ENCODE measurements at regions of chr17 and their contacts with region 1.

Region 1: DNA sequence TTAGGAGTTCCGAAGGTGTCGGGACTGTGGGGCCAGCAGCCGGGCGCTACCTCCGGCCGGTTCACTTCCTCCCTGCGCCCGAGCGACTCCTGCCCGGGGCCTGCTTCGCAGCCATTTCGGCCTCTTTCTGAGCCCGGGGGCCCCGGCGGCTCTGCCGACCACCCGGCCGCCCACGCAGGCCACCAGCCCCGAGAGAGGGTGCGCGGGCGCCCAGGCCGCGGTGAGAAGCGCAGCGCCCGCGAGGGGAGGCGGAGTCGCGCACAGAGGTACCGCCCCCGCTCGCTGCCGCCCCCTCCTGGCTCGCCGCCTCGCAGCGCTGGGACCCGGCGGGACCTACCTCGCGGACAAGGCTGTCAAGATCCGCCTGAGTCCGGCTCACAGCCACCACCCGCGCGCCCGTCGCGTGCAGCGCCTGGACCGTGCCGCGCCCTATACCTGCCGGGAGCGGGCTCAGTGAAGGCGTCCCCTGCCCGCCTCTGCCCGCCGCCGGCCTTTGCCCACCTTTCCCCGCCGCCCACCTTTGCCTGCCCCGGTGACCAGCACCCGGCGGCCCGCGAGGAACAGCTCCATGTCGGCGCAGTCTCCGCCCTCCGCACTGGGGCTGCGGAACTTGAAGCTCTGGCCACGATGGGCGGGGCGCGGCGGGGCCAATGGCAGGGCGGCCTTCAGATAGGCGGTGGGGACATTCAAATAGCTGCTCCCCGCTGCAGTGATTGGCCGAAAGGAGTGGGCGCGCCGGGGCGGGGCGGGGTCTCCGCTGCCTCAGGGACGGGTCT is at the start of gene DCXR:
- DNase-seq: peak; percentile 82 to 98 (median 95)
- ATAC-seq: peak; percentile 93
- H3K4me3 ChIP-seq: peak within 1 kb of the TSS; percentile 68 to 73
- H3K4me3 Mint-ChIP-seq: peak within 1 kb of the TSS; percentile 87
- H3K27ac ChIP-seq: peak within 1 kb of the TSS; percentile 58 to 80
- H3K27ac Mint-ChIP-seq: peak within 1 kb of the TSS; percentile 87
- H3K4me1 ChIP-seq: peaks cover 14% of the 10 kb centered on the region
- H3K4me1 Mint-ChIP-seq: peaks cover 26% of the 10 kb centered on the region
- H3K27me3 ChIP-seq: no peaks in the 10 kb centered on the region
- H3K27me3 Mint-ChIP-seq: no peaks in the 10 kb centered on the region
- CTCF ChIP-seq: peak; percentile 82
- total RNA-seq, gene DCXR: 71.7 to 77.7 TPM

Region 2: DNA sequence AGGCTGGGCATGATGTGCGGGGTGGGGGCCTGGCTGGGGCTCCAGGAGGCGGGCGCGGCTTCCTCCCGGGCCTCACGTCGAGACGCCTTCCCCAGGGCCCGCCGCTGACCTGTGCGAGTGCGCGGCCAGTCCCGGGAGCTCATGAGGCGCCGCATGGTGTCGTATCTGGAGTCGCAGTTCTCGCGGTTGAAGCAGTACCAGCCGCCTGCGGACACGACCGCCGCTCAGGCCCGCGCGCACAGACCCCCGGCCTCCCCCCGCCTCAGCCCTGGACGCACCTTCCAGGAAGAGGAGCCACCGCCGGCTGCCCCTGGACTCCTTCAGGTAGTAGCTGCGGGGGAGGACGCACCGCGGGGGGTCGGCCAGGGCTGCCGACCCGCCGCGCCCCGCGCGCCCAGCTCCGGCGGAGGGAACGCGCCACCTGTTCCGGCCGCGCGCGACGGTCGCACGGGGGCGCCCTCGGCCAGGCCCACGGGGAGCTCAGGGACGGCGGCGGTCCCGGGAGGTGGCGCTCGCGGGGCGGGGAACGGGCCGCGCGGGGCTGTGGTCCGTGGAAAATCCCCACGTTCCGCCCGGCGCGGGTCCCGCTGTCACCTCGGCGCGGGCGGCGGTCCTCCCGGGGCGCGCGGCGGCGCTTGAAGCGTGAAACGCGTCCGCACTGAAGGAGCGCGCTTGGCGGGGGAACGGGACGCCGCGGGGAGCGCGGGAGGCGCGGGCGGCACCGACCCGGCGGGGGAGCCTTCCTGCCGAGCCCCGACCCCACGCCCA is 77.8 kb before region 1 on chr17:
- CTCF ChIA-PET with region 1: interaction called, 11 read pairs
- POLR2A ChIA-PET with region 1: no interaction called
- intact Hi-C with region 1: no loop called
- DNase-seq: peak; percentile 71 to 92 (median 81)
- ATAC-seq: peak; percentile 93
- H3K4me3 ChIP-seq: peak overlapping the region; percentile 8 to 35
- H3K4me3 Mint-ChIP-seq: peak overlapping the region; percentile 15
- H3K27ac ChIP-seq: no peak overlapping the region
- H3K27ac Mint-ChIP-seq: no peak overlapping the region
- H3K4me1 ChIP-seq: peaks cover 6% of the 10 kb centered on the region
- H3K4me1 Mint-ChIP-seq: peaks cover 10% of the 10 kb centered on the region
- H3K27me3 ChIP-seq: peaks cover 6 to 22% of the 10 kb centered on the region in 2 experiments
- H3K27me3 Mint-ChIP-seq: peaks cover 13% of the 10 kb centered on the region
- CTCF ChIP-seq: peak; percentile 90

Region 3: DNA sequence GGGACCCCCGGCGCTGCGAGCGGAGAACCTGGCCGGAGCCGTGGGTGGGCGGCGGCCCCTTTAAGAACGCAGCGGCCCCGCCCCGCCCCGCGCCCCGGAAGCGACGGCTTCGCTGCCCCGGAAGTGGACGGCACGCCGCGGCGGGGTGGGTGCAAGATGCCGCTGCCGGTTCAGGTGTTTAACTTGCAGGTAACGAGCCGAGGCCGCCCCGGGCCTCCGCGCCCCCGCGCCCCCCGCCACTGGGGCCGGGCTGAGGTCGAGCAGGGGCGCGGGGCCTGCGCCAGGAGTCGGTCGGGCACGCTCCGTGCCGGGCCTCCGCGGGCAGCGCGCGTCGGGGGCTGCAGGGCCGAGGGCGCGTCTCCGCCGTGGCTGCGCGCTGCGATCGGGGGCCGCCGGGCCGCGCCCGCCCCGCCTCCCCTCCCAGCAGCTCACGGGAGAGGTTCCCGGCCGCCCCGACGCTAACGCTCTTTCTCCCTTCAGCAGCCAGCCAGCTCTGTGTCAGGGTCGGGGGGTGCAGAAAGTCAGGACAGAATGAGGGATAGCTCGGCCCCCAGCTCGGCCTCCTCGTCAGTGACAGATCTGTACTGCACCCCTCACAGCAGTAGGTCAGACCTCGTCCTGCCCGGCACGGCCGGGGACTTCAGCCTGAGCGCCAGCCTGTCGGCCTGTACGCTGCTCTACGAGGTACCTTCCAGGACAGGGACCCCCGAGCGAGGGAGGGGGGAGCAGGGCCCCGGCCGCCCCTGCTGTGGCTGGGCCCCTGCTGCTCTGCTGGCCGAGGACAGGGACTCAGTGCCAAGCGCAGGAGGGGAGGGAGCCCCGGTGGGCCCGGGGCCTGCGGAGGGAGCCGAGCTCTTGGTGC is 14.7 kb after region 1 on chr17 and contains the starts of genes GPS1 and RFNG:
- CTCF ChIA-PET with region 1: interaction called, 7 read pairs
- POLR2A ChIA-PET with region 1: interaction called, 4 read pairs
- intact Hi-C with region 1: loop called in 1 of 2 experiments (anchors 1 kb)
- DNase-seq: peak; percentile 49 to 87 (median 82)
- ATAC-seq: peak; percentile 92
- H3K4me3 ChIP-seq: peak within 1 kb of the TSS; percentile 63 to 67
- H3K4me3 Mint-ChIP-seq: peak within 1 kb of the TSS; percentile 83
- H3K27ac ChIP-seq: peak within 1 kb of the TSS; percentile 25 to 30
- H3K27ac Mint-ChIP-seq: peak within 1 kb of the TSS; percentile 72
- H3K4me1 ChIP-seq: peaks cover 29% of the 10 kb centered on the region
- H3K4me1 Mint-ChIP-seq: peaks cover 18% of the 10 kb centered on the region
- H3K27me3 ChIP-seq: no peaks in the 10 kb centered on the region
- H3K27me3 Mint-ChIP-seq: no peaks in the 10 kb centered on the region
- CTCF ChIP-seq: no peak
- total RNA-seq, gene GPS1: 72.0 to 72.8 TPM
- total RNA-seq, gene RFNG: 26.2 to 27.2 TPM

Region 4: DNA sequence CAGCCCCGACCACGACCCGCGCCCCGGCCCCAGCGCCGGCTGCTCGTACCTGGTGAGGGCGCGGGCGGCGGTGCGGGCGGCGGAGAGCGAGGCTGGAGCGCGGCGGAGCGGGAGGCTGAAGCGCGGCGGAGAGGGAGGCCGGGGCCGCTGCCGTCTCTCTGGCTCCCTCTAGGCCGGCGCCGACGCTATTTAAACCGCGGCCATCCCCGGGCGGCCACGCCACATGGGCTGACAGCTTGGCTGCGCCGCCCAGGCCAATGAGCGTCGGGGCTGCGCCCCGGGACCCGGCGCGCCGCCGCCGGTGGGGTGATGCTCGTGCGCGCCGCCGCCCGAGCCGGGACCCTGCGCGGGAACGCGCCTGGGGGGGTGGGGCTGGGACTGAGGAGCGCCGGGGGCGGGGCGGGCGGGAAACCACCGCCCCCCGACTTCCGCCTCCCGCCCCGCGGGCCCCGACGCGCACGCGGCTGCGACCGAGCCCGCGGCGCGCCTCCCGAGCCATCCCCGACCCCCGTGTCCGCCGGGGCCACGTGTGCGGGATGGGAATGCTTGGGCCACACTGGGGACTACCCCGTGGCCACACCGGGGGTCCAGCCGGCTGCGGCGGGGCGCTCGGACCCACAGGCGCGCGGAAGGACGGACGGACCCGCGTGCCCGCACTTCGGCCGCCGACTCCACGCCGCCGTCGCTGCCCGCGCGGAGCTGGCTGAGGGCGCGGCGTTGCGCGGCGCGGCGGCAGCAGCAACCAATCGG is 60.9 kb after region 1 on chr17 and contains the start of gene FASN:
- CTCF ChIA-PET with region 1: interaction called, 4 read pairs
- POLR2A ChIA-PET with region 1: interaction called, 4 read pairs
- intact Hi-C with region 1: loop called (anchors 1 kb)
- DNase-seq: peak; percentile 81 to 96 (median 92)
- ATAC-seq: peak; percentile 61
- H3K4me3 ChIP-seq: peak within 1 kb of the TSS; percentile 48 to 74
- H3K4me3 Mint-ChIP-seq: peak within 1 kb of the TSS; percentile 74
- H3K27ac ChIP-seq: peak within 1 kb of the TSS; percentile 81 to 87
- H3K27ac Mint-ChIP-seq: peak within 1 kb of the TSS; percentile 41
- H3K4me1 ChIP-seq: peaks cover 20% of the 10 kb centered on the region
- H3K4me1 Mint-ChIP-seq: peaks cover 5% of the 10 kb centered on the region
- H3K27me3 ChIP-seq: no peaks in the 10 kb centered on the region
- H3K27me3 Mint-ChIP-seq: no peaks in the 10 kb centered on the region
- CTCF ChIP-seq: peak; percentile 13
- total RNA-seq, gene FASN: 245 to 263 TPM

Region 5: DNA sequence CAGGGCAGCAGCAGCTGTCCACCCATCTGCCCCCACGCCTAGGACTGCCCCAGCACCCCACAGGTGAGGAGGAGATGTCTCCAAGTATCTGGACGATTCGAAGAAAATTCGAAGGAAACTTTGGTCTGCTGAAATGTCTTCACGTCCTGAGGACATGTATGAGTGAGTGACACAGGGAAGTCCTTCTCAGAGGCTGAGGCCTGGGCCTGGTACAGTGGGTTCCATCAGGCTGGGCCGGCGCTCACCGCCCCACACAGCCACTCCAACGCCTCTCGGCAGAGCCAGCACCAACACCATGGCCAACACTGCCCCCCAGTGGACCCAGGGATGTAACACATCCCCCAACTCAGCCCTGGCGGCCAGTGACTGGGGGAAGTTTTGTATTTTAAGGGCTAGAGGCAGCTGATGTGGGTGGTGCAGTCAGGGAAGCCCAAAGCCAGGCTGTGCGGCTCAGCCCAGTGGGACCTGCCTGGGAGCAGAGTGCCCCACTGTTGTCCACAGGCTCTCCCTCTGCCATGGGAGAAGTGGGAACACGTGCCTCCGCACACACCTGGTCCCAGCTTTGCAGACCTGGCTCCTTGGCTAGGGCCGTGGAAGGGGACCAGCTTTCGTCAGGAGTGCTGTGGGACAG is 116.6 kb after region 1 on chr17:
- CTCF ChIA-PET with region 1: interaction called, 105 read pairs
- POLR2A ChIA-PET with region 1: no interaction called
- intact Hi-C with region 1: no loop called
- DNase-seq: peak; percentile 71 to 92 (median 84)
- ATAC-seq: peak; percentile 100
- H3K4me3 ChIP-seq: no peak overlapping the region
- H3K4me3 Mint-ChIP-seq: no peak overlapping the region
- H3K27ac ChIP-seq: no peak overlapping the region
- H3K27ac Mint-ChIP-seq: peak overlapping the region; percentile 57
- H3K4me1 ChIP-seq: peaks cover 7% of the 10 kb centered on the region
- H3K4me1 Mint-ChIP-seq: peaks cover 5% of the 10 kb centered on the region
- H3K27me3 ChIP-seq: no peaks in the 10 kb centered on the region
- H3K27me3 Mint-ChIP-seq: no peaks in the 10 kb centered on the region
- CTCF ChIP-seq: peak; percentile 98

Measured in CD8-positive, alpha-beta T cell (primary cell).